ENCODE measurements at regions of chr2 and their contacts with region 1.

Region 1: GRCh38 chr2:30346471-30347169 is 100.4 kb upstream of the LCLAT1 start:
- DNase-seq: peak; percentile 80 to 91
- ATAC-seq: peak; percentile 94 to 98 (median 96)
- H3K4me3 ChIP-seq: peak overlapping the region; percentile 34 to 60 (median 48)
- H3K27ac ChIP-seq: peak overlapping the region; percentile 47 to 91 (median 82)
- H3K4me1 ChIP-seq: peaks cover 8 to 61% (median 36%) of the 10 kb centered on the region in 9 donors
- H3K27me3 ChIP-seq: no peaks in the 10 kb centered on the region
- CTCF ChIP-seq: peak in 1 of 9 donors; percentile 21

Region 2: GRCh38 chr2:30231212-30231995 is 115.2 kb before region 1 on chr2 and contains the start of gene LBH:
- intact Hi-C with region 1: loop called in 9 of 10 experiments (anchors 5 to 10 kb)
- DNase-seq: peak; percentile 90 to 92
- ATAC-seq: peak; percentile 82 to 91 (median 90)
- H3K4me3 ChIP-seq: peak within 1 kb of the TSS; percentile 75 to 97 (median 90)
- H3K27ac ChIP-seq: peak within 1 kb of the TSS; percentile 82 to 99 (median 94)
- H3K4me1 ChIP-seq: peaks cover 7 to 54% (median 45%) of the 10 kb centered on the region in 9 donors
- H3K27me3 ChIP-seq: peaks cover 0 to 45% (median 0%) of the 10 kb centered on the region in 7 donors
- CTCF ChIP-seq: peak in 2 of 9 donors; percentile 6 to 22
- total RNA-seq, gene LBH: 110 to 204 (median 156) TPM

Region 3: GRCh38 chr2:30410217-30410616 is 63.6 kb after region 1 on chr2:
- intact Hi-C with region 1: loop called in 4 of 10 experiments (anchors 5 kb)
- DNase-seq: no peak
- ATAC-seq: no peak
- H3K4me3 ChIP-seq: no peak overlapping the region
- H3K27ac ChIP-seq: peak overlapping the region in 9 of 10 donors; percentile 69 to 92 (median 86)
- H3K4me1 ChIP-seq: peaks cover 30 to 85% (median 67%) of the 10 kb centered on the region in 9 donors
- H3K27me3 ChIP-seq: no peaks in the 10 kb centered on the region
- CTCF ChIP-seq: no peak

Region 4: GRCh38 chr2:30436859-30437435 is 90.3 kb after region 1 on chr2:
- intact Hi-C with region 1: loop called in 2 of 10 experiments (anchors 5 to 10 kb)
- DNase-seq: peak in 1 of 2 donors; percentile 36
- ATAC-seq: peak in 7 of 8 donors; percentile 44 to 76 (median 68)
- H3K4me3 ChIP-seq: no peak overlapping the region
- H3K27ac ChIP-seq: peak overlapping the region; percentile 33 to 88 (median 78)
- H3K4me1 ChIP-seq: peaks cover 10 to 50% (median 32%) of the 10 kb centered on the region in 9 donors
- H3K27me3 ChIP-seq: no peaks in the 10 kb centered on the region
- CTCF ChIP-seq: no peak

Region 5: GRCh38 chr2:30447149-30448045 is 100.8 kb after region 1 on chr2 and contains the start of gene LCLAT1:
- intact Hi-C with region 1: loop called in 1 of 10 experiments (anchors 10 kb)
- DNase-seq: peak; percentile 87
- ATAC-seq: peak; percentile 95 to 99 (median 98)
- H3K4me3 ChIP-seq: peak within 1 kb of the TSS; percentile 79 to 99 (median 90)
- H3K27ac ChIP-seq: peak within 1 kb of the TSS; percentile 44 to 92 (median 87)
- H3K4me1 ChIP-seq: peaks cover 4 to 32% (median 21%) of the 10 kb centered on the region in 9 donors
- H3K27me3 ChIP-seq: no peaks in the 10 kb centered on the region
- CTCF ChIP-seq: peak in 3 of 9 donors; percentile 13 to 33 (median 22)
- total RNA-seq, gene LCLAT1: 26.6 to 56.4 (median 44.9) TPM

Region 6: DNA sequence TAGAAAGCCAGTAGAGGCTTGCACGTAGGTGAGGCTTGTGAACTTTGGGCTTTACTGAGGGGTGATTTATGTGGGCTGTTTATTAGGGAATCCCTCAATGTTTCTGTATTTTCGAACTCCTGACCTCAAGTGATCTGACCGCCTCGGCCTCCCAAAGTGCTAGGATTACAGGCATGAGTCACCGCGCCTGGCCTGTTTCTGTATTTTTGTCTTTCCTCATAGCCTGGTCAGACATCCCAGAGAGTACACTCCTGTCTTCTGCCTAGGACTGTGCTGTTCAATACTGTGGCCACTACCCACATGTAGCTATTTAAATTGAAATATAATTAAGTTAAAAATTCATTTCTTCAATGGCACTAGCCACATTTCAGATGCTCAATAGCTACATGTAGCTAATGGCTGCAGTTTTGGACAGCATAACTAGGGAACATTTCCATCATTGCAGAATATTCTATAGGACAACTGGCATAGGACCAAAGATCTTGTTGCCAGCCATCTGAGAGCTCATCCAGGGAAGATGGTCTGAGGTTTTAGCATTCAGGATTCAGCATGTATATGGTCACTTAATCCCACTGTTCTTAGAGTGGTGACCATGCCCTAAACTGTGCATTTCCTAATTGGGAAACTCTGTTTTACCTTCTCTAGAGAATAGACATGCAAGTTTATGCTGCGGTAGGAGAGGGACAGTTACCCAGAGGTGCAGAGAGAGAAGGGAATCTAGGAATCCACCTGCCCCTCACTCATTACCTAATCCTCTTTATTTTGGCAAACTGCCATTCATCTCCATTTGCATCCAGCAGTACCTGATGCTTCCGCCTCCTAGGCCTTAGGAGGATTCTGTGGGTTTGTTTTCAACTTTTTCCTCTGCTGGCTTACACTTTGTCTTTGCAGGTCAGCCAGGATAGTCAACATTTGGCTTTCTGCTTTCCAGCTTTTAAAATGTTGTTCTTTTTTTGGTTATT is 164.8 kb after region 1 on chr2:
- intact Hi-C with region 1: loop called in 1 of 10 experiments (anchors 5 kb)
- DNase-seq: peak; percentile 25 to 51
- ATAC-seq: peak in 7 of 8 donors; percentile 76 to 85 (median 84)
- H3K4me3 ChIP-seq: no peak overlapping the region
- H3K27ac ChIP-seq: peak overlapping the region; percentile 13 to 75 (median 48)
- H3K4me1 ChIP-seq: peaks cover 12 to 70% (median 57%) of the 10 kb centered on the region in 9 donors
- H3K27me3 ChIP-seq: no peaks in the 10 kb centered on the region
- CTCF ChIP-seq: no peak

Region 7: GRCh38 chr2:30541680-30542079 is 195.1 kb after region 1 on chr2:
- intact Hi-C with region 1: no loop called
- DNase-seq: no peak
- ATAC-seq: no peak
- H3K4me3 ChIP-seq: no peak overlapping the region
- H3K27ac ChIP-seq: no peak overlapping the region
- H3K4me1 ChIP-seq: peaks cover 0 to 23% (median 7%) of the 10 kb centered on the region in 9 donors
- H3K27me3 ChIP-seq: no peaks in the 10 kb centered on the region
- CTCF ChIP-seq: no peak

Region 8: GRCh38 chr2:30691948-30692828 is 345.6 kb after region 1 on chr2:
- intact Hi-C with region 1: loop called in 3 of 10 experiments (anchors 1 to 5 kb)
- DNase-seq: no peak
- ATAC-seq: peak; percentile 35 to 76 (median 63)
- H3K4me3 ChIP-seq: no peak overlapping the region
- H3K27ac ChIP-seq: peak overlapping the region in 6 of 10 donors; percentile 16 to 76 (median 53)
- H3K4me1 ChIP-seq: peaks cover 5 to 48% (median 27%) of the 10 kb centered on the region in 9 donors
- H3K27me3 ChIP-seq: no peaks in the 10 kb centered on the region
- CTCF ChIP-seq: peak in 8 of 9 donors; percentile 19 to 63 (median 38)